BJ (cell line): ENCODE measurements at regions of chr19 and their contacts with region 1.

Region 1: DNA sequence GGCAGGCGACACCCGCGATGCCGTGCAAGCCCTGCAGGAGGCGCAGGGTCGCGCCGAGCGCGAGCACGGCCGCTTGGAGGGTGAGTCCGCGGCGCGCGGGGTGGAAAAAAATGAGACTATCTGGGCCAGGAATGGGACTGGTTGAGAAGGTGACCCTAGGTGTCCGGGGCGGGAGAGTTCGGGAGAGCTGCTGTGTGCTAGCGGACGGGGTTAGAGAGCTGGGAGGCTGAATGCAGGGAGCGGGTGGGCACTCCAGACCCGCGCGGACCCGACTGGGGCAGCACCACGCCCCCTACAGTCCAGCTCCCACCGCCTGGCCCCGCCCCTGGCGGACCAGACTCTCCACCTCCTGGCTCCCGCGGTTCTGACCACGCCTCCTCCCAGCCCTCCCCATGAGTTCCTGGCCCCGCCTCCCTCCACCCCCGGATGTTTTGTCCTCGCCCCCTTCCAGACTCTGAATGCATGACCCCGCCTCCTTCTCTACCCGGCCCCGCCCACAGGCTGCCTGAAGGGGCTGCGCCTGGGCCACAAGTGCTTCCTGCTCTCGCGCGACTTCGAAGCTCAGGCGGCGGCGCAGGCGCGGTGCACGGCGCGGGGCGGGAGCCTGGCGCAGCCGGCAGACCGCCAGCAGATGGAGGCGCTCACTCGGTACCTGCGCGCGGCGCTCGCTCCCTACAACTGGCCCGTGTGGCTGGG is 1.5 kb downstream of the CLEC11A start:
- DNase-seq: peak; percentile 96
- H3K4me3 ChIP-seq: peak overlapping the region; percentile 81
- H3K27me3 ChIP-seq: no peaks in the 10 kb centered on the region
- CTCF ChIP-seq: peak; percentile 63

Region 2: DNA sequence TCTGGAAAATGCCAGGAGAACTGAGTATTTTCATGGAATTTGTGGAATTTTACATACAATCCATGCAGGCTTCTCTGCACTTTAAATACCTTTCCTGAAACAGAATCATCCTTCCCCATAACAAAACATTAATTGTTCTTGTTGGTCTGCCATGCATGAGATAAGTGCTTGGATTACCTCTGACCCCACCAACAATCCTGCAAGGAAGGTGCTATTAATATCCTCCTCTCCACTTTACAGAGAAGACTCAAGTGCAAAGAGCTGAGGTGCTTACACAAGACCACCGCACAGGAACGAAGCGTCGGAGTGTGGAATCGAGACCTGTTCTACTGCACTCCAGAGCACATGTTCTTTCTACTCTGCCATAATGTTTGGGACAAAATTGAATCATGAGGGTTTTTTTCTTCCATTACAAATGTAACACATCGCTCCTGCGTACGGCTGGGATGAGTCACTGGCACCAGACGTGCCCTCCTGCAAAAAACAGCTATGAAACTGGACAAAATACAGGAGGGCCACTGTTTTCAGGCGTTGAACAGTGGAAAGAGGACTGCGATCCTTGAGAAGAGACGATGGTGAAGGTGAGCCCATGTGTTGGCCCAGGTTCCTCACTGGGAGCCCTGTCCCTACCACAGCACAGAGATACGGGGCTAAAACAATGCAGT is 143.6 kb before region 1 on chr19:
- CTCF ChIA-PET with region 1: no interaction called
- POLR2A ChIA-PET with region 1: no interaction called
- DNase-seq: no peak
- H3K4me3 ChIP-seq: no peak overlapping the region
- H3K27me3 ChIP-seq: no peaks in the 10 kb centered on the region
- CTCF ChIP-seq: no peak

Region 3: GRCh38 chr19:50663482-50663790 is 61.2 kb before region 1 on chr19:
- CTCF ChIA-PET with region 1: interaction called, 5 read pairs
- POLR2A ChIA-PET with region 1: interaction called, 10 read pairs
- DNase-seq: no peak
- H3K4me3 ChIP-seq: no peak overlapping the region
- H3K27me3 ChIP-seq: peaks cover 12% of the 10 kb centered on the region
- CTCF ChIP-seq: peak; percentile 18; the same call in 1 of the 2 replicates

Region 4: GRCh38 chr19:50669302-50670101 is 55.2 kb before region 1 on chr19:
- CTCF ChIA-PET with region 1: interaction called, 19 read pairs
- POLR2A ChIA-PET with region 1: no interaction called
- DNase-seq: no peak
- H3K4me3 ChIP-seq: no peak overlapping the region
- H3K27me3 ChIP-seq: peaks cover 16% of the 10 kb centered on the region
- CTCF ChIP-seq: peak; percentile 88

Region 5: GRCh38 chr19:50705422-50706019 is 19.1 kb before region 1 on chr19:
- CTCF ChIA-PET with region 1: interaction called, 13 read pairs
- POLR2A ChIA-PET with region 1: no interaction called
- DNase-seq: no peak
- H3K4me3 ChIP-seq: no peak overlapping the region
- H3K27me3 ChIP-seq: no peaks in the 10 kb centered on the region
- CTCF ChIP-seq: peak; percentile 90

Region 6: DNA sequence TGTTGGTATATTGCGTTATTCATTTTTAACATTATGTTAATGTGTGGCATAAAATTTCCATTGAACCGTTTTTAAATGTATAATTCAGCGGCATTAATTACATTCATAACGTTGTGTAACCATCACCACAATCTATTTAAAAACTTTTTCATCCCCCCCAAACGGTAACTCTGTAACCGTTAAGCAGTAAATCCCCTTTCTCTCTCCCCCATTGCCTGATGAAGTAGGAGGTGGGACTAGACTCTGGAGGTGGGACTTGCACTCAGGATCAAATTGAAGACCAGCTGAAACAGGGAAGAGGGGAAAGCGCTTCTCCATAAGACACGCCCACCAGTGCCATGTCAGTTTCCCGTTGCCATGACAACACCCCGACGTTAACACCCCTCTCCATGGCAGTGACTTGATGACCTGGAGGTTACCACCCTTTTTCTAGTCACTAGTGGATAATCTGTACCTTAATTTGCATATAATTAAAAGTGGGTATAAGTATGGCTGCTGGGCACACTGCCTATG is 15.3 kb after region 1 on chr19:
- CTCF ChIA-PET with region 1: interaction called, 10 read pairs
- POLR2A ChIA-PET with region 1: interaction called, 30 read pairs
- DNase-seq: no peak
- H3K4me3 ChIP-seq: no peak overlapping the region
- H3K27me3 ChIP-seq: peaks cover 2% of the 10 kb centered on the region
- CTCF ChIP-seq: no peak

Region 7: DNA sequence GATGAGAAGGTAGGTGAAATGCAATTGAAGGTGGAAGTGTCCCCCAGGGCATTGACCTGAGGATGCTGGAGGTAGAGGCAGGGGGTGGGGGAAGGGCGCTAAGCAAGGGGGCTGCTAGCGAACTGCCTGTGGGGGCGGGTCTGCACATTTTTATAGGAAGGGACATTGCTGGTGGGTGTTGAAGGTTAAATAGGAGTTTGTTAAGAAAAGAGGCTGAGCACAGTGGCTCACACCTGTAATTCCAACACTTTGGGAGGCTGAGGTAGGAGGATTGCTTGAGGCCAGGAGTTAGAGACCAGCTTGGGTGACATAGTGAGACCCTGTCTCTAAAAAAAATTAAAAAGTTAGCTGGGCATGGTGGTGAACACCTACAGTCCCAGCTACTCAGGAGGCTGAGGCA is 60.0 kb after region 1 on chr19:
- CTCF ChIA-PET with region 1: interaction called, 17 read pairs
- POLR2A ChIA-PET with region 1: interaction called, 3 read pairs
- DNase-seq: no peak
- H3K4me3 ChIP-seq: no peak overlapping the region
- H3K27me3 ChIP-seq: peaks cover 3% of the 10 kb centered on the region
- CTCF ChIP-seq: no peak

Region 8: GRCh38 chr19:50952910-50953309 is 228.2 kb after region 1 on chr19 and contains the start of gene KLK5:
- CTCF ChIA-PET with region 1: no interaction called
- POLR2A ChIA-PET with region 1: no interaction called
- DNase-seq: no peak
- H3K4me3 ChIP-seq: no peak within 1 kb of the TSS
- H3K27me3 ChIP-seq: no peaks in the 10 kb centered on the region
- CTCF ChIP-seq: no peak
- polyA plus RNA-seq, gene KLK5: not detected in 2 replicates